ENCODE measurements at regions of chr10 and their contacts with region 1.

Region 1: DNA sequence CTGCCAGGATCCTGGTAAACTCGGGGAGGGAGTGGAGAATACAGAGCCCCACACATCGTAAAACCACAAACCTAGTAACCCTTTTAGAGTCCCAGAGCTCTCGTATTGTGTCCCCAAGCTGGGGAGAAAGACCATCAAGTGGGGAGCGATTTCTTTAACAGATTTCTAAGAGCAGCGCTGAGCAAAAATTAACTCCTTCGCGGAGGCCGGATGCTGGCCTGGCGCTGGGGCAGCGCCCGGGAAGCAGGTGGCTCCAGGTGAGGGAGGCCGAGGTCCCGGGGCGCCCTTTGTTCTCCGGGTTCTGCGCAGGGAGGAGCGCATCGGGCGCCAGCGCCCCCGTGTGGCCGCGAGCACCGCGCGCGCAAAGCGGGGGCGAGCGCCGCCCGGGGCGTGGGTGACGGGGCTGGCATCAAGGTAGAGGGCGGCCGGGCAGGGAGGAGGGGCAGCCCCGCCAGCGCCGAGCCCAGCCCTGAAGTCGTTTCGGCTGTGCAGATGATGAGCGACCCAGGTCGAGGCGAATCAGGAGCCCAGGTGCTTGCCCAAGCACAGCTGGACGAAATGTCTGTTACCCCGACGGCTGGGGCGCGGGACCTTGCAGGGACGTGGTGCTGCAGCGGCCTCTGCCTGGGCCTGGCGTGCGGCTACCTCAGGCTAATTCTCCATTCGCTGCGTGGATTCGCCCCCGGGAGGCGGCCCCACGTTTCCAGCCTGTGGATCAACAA is 10.4 kb upstream of the FGFR2 start:
- DNase-seq: peak; percentile 56 to 76
- ATAC-seq: peak; percentile 92

Region 2: DNA sequence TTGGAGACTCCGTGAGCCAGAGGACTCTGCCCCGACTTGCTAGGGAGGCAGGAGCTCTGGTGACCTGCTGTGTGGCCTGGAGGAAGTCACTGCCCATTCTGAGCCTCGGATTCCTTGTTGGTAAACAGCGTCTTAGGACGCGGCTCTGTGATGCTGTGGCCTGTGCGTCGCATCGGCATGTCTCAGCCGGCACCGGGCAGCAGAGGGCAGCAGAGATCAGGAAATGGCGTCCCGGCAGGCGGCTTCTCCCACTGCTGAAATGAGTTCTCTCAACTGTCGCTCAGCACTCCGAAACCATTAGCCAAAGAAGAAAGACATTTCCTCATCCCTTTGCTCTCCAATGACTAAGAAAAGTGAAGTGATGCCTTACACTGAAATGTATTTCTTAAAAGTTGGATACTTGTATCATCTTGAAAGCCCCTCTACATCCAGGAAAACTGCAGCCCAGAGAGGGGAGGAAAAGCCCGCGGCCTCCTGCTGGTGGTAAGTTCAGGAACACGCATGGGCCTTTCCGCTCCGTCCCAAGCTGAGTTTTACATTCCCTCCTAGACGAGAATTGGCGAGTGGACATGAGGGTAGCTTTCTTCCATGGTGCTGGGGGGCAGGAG is 665.7 kb before region 1 on chr10:
- intact Hi-C with region 1: loop called in 1 of 2 experiments (anchors 10 kb)
- DNase-seq: peak; percentile 60 to 82
- ATAC-seq: peak; percentile 94

Region 3: DNA sequence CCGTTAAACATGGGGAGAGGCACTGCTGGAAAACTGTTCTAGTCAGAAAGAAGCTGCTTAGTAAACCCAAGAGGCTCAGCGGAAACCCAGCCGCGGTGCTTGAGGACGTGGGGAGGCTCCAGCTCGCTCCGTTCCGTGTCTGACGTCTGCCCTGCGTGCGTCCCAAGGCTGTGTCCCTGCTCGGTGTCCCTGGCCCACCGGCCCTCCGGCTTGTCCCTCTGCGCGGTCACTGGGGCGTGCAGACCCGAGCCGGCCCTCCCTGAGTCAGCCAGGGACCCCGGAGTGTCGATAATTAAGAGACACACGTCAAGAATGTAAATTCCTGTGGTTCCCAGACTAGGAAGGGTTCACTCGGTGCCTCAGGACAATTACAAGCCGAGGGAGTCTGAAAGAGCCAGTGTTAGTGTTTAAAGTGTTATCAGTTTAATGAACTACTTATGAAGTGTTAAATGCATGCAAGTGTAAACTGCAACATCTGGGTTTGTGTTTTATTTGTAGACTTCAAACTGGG is 658.5 kb before region 1 on chr10:
- intact Hi-C with region 1: loop called (anchors 5 to 10 kb)
- DNase-seq: no peak
- ATAC-seq: no peak

Region 4: DNA sequence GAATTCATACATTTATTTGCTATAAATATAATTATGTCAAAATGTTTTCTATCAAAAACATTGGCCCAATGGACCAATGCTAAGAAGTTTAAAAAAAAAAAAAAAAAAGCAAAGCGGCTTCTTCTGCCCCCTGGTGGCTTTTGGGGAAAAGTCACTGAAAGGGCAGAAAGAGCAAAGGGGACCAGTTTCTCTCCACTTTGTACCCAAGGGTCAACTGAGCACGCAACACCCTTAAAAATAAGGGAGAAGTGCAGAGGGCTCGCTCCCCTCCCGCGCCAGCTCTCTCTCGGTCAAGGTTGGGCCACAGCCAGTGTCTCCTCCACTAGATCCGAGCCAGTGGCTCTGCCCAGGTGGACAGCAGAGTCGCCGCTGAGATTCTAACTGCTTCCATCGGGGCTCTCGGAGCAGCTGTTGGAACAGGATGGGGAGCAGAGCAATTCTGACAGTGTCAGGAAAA is 126.0 kb after region 1 on chr10:
- intact Hi-C with region 1: loop called in 1 of 2 experiments (anchors 10 kb)
- DNase-seq: peak in 1 of 2 donors; percentile 32
- ATAC-seq: peak; percentile 26

Region 5: DNA sequence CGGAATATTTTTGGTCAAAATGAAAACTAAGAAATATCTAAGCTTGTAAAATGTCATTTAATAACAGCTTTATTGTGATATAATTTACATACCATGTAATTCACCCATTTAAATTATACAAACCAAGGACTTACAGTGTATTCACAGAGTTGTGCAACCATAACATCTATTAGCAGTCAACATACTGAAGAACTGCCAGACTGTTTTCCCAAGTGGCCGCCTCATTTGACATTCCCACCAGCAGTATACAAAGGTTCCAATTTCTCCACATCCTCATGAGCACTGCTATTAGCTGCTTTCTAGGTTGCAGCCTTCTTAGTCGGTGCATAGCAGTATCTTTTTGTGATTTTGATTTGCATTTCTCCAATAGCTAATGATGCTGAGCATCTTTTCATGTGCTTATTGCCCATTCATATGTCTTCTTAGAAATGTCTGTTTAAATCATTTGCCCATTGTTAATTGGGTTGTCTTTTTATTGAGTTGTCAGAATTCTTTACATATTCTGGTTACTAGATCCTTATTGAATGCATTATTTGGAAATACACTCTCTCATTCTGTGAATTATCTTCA is 142.6 kb after region 1 on chr10:
- intact Hi-C with region 1: no loop called
- DNase-seq: no peak
- ATAC-seq: no peak